H1 (cell line): ENCODE measurements at regions of chr10 and their contacts with region 1.

Region 1: GRCh38 chr10:71727738-71728737 is 8.5 kb upstream of the C10orf105 start:
- DNase-seq: no peak
- H3K4me3 ChIP-seq: no peak overlapping the region
- H3K27ac ChIP-seq: no peak overlapping the region
- H3K4me1 ChIP-seq: peaks cover 0 to 4% (median 0%) of the 10 kb centered on the region in 4 experiments; a peak in 1 of 7 replicates
- H3K27me3 ChIP-seq: no peaks in the 10 kb centered on the region
- CTCF ChIP-seq: no peak
- EP300 ChIP-seq: no peak
- POLR2A ChIP-seq: no peak
- RAD21 ChIP-seq: no peak

Region 2: DNA sequence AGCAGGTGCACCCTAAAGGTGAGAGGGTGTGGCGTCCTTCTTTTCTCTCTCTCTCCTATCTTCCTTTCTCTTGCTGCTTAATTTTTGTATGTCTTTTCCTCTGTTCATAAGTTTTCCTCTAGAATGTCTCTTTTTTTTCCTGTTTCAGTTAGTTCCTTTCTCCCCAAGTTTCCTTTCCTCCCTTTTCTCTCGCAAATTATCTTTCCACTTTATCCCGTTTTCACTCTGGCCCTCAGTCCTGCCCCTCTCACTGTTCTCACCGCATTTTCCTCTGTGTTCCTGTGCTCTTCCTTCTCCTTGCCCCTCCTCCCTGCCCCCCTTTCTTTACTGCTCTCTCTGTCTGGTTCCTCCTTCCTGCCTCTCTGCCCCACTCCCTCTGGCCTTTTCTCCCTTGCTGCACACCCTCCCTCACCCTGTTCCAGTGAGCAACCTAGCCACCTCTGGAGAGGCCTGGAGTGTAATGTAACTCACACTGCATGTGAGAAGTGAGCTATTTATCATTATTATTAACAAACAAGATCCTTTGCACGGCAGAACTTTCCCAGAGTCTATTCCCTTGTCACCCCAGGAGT is 166.9 kb before region 1 on chr10:
- CTCF ChIA-PET with region 1: no interaction called
- POLR2A ChIA-PET with region 1: no interaction called
- DNase-seq: no peak
- H3K4me3 ChIP-seq: no peak overlapping the region
- H3K27ac ChIP-seq: no peak overlapping the region
- H3K4me1 ChIP-seq: peaks cover 2 to 14% (median 10%) of the 10 kb centered on the region in 4 experiments
- H3K27me3 ChIP-seq: 0 out of 7 replicates have a peak, but pooled peaks cover 0 to 2% (median 0%) of the 10 kb centered on the region in 4 experiments
- CTCF ChIP-seq: no peak
- EP300 ChIP-seq: no peak
- POLR2A ChIP-seq: no peak
- RAD21 ChIP-seq: no peak

Region 3: DNA sequence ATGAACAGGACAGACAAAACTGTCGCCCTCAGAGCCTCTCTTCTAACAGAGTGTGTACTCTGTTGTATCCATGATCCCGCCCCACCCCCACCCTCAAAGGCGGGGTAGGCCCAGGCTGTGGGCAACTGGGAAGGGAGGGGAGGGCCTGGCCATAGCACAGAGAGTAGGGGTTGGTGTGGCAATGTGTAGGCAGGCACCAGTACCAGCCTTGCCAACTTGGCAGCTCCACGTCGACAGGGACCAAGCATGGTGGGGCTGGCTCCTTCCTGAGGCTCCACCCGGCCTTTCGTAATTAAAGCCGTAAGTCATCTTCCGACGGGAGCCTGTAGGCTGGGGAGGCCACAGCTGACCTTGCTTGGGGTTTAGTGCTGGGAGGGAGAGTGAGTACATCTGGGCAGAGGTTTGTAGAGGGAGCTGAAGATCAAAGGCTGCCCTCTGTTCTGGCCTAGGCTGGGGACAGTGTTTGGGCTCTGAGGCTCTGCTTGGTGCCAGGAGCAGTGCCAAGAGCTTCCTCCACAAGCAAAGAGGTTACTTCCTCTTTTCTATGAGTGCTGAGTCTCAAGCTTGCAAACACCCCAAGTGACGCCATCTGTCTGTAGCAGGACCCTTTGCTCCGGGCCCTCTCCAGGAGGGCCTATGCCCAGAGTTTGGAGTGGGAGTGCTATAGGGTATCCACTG is 130.1 kb before region 1 on chr10:
- CTCF ChIA-PET with region 1: no interaction called
- POLR2A ChIA-PET with region 1: no interaction called
- DNase-seq: no peak
- H3K4me3 ChIP-seq: no peak overlapping the region
- H3K27ac ChIP-seq: no peak overlapping the region
- H3K4me1 ChIP-seq: no peaks in the 10 kb centered on the region
- H3K27me3 ChIP-seq: no peaks in the 10 kb centered on the region
- CTCF ChIP-seq: no peak
- EP300 ChIP-seq: no peak
- POLR2A ChIP-seq: no peak
- RAD21 ChIP-seq: no peak

Region 4: DNA sequence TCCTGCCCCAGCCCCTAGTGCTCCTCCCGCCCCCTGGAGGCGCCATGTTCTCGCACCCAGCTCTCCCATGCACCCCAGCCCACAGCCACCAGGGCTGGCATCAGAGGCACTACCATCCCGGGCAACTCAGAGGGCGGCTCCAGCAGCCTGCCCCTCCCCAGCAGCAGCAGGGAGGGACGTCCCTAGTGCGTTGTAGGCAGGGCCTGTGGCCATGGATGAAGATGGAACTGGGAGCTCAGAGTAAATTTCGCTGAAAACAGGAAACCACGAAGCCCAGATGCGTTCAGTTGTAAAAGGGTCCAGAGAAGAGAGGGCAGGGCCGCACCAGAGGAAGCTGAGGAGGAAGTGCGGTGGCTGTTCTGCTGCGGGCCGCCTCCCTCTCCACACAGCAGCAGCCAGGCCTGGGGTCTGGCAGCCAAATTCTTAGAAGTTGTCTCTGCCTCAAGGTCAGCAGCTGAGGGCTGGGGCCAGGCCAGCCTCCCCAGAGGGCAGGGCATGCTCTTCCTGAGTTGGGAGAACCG is 20.7 kb after region 1 on chr10:
- CTCF ChIA-PET with region 1: interaction called, 23 read pairs
- POLR2A ChIA-PET with region 1: no interaction called
- DNase-seq: no peak
- H3K4me3 ChIP-seq: no peak overlapping the region
- H3K27ac ChIP-seq: no peak overlapping the region
- H3K4me1 ChIP-seq: peaks cover 1 to 8% (median 4%) of the 10 kb centered on the region in 4 experiments; a peak in 5 of 7 replicates
- H3K27me3 ChIP-seq: 0 out of 7 replicates have a peak, but pooled peaks cover 0 to 2% (median 0%) of the 10 kb centered on the region in 4 experiments
- CTCF ChIP-seq: peak in 2 of 3 experiments; percentile 12; a peak in 1 of 4 replicates
- EP300 ChIP-seq: no peak
- POLR2A ChIP-seq: no peak
- RAD21 ChIP-seq: no peak

Region 5: DNA sequence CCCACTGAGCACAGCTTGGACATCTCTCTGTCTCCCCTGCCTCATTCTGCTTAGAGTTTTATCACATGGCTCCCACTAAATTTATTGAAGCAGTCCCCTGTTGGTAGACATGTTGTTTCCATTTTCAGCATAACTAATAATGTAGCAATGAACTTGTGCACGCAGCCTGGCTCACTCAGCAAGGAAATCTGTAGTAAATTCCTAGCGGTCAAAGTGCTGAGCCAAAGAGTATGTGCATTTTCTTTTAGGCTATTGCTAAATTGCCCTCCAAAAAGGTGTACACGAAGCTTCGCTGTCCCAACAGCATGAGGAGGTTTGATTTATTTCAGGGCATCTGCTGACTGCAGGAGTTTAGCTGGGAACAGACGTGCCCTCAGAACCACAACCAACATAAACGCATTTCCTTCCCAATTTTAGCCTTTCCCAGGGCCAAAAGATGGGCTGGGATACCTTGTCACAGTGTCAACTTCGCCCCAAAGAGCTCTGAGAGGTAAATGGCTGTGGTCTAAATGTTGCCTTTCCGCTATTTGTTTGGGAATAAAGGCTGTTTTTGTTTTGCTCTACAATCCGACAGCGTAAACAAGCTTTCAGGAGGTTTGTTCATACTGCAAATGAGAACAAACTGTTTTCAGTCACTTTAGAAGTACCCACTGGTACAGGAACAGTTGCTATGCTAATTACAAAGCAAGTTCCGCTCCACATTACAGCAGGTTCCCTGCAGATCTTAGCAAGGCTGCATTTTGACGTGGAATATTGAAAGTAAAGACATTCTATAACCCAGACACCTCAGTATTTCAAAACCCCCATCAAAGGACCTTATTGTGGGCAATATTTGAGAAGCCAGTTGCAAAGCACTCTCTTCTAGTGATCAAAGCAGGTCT is 28.5 kb after region 1 on chr10:
- CTCF ChIA-PET with region 1: interaction called, 23 read pairs
- POLR2A ChIA-PET with region 1: no interaction called
- DNase-seq: no peak
- H3K4me3 ChIP-seq: no peak overlapping the region
- H3K27ac ChIP-seq: no peak overlapping the region
- H3K4me1 ChIP-seq: peaks cover 0 to 7% (median 4%) of the 10 kb centered on the region in 4 experiments; a peak in 5 of 7 replicates
- H3K27me3 ChIP-seq: no peaks in the 10 kb centered on the region; a peak in 3 of 7 replicates
- CTCF ChIP-seq: no peak
- EP300 ChIP-seq: no peak
- POLR2A ChIP-seq: no peak
- RAD21 ChIP-seq: no peak

Region 6: DNA sequence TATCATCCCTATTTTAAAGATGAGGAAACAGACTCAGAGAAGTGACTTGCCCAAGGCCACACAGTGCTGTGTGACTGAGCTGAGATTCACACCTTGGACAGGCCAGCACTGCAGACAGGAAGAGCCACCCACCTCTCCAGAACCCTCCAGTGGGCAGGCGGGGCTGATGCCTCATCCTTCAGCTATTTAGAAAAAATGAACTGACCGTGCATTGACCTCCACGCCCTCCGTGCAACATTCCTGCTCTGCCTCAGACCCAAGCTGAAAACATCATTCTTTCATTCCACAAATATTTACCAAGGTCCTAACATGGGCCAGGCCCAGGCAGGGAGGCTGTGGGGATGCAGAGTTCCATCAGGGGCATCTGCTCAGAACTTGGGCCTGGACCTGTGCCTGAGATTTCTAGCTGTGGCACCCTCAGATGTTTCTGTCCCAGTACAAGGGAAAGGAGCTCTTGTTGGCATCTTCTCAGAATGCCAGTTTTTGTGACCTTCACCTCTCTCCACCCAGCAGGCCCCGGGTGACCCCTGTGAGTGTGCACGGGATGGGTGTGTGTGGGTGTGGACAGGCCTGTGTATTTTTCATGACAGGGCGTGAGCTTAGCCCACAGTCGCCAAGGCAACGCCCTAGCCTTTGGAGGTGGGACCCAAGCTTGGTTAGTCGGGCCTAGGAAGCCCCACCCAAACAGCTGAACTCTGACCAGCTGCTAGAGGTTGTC is 38.8 kb after region 1 on chr10:
- CTCF ChIA-PET with region 1: interaction called, 15 read pairs
- POLR2A ChIA-PET with region 1: no interaction called
- DNase-seq: no peak
- H3K4me3 ChIP-seq: no peak overlapping the region
- H3K27ac ChIP-seq: no peak overlapping the region
- H3K4me1 ChIP-seq: no peaks in the 10 kb centered on the region; a peak in 1 of 7 replicates
- H3K27me3 ChIP-seq: peaks cover 0 to 2% (median under 1%) of the 10 kb centered on the region in 4 experiments; a peak in 1 of 7 replicates
- CTCF ChIP-seq: no peak
- EP300 ChIP-seq: no peak
- POLR2A ChIP-seq: no peak
- RAD21 ChIP-seq: no peak

Region 7: DNA sequence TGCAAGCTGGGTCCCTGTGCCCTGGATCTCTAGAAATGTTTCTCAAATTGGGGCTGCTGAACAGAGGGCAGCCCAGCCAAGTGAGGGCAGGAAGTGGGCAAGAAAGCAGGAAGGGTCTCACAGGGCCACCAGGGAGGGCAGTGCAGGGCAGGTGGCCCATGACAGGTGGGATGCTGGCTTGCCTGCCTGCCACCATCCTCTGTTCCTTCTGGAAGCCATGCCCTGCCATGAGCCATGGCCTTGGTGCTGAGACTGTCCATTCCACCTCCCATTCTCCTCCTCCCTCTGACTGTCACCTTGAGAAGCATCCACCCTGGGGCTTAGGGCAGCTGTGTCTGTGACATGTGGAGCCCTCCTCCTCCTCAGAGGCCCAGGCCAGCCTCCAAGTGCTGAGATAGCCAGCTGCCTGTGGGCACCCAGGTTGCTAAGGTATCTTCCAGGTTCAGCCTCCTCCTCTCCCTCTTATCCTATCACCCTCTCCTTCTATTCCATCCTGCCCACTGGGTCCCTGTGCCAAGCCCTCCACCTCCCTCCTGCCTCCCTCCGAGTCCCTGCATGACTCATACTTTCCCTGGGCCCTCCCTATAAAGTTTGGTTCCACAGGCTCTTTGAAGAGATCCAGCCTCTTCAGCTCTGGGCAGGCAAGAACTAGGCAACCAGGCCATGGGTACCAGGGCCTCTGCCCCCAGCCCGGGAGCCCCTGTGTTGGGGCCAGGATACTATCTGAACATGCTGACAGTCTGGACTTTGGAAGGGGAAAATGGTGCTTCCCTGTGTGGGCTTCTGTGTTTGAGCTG is 44.0 kb after region 1 on chr10:
- CTCF ChIA-PET with region 1: interaction called, 15 read pairs
- POLR2A ChIA-PET with region 1: no interaction called
- DNase-seq: no peak
- H3K4me3 ChIP-seq: no peak overlapping the region
- H3K27ac ChIP-seq: no peak overlapping the region
- H3K4me1 ChIP-seq: peaks cover 0 to 7% (median under 1%) of the 10 kb centered on the region in 4 experiments; a peak in 3 of 7 replicates
- H3K27me3 ChIP-seq: peaks cover 3 to 23% (median 16%) of the 10 kb centered on the region in 4 experiments; a peak in 6 of 7 replicates
- CTCF ChIP-seq: no peak
- EP300 ChIP-seq: no peak
- POLR2A ChIP-seq: no peak
- RAD21 ChIP-seq: no peak

Region 8: DNA sequence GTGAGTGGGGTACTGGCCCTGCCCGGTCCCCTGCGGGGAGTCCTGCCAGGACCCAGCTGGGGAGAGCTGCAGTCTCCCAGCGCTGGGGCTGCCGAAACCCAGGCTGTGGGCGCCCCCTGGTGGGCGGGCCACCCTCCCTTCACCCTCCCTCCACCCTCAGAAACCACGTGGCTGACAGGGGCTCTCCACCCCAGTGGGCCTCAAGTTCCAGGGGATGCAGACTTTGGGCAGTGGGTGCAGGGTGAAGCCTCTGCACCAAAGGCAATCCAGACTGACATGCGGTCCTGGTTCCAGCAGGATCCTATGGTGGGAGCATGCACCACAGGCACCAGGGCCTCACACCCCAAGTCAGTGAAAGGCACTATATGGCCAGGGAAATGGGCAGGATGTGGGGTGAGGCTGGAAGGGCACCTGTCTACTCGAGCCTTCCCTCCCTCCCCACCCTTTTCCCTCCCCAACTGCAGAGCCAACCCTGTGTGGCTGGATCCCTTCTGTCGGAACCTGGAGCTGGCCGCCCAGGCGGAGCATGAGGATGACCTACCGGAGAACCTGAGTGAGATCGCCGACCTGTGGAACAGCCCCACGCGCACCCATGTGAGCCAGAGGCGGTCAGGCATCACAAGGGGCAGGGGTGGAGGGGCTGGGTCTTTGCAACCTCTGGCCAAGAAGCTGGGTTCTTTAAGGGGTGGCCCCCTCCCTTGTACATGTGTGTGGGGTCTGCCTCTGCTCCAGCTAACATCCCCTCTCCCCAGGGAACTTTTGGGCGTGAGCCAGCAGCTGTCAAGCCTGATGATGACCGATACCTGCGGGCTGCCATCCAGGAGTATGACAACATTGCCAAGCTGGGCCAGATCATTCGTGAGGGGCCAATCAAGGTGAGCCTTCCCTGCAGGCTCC is 84.2 kb after region 1 on chr10:
- CTCF ChIA-PET with region 1: interaction called, 10 read pairs
- POLR2A ChIA-PET with region 1: no interaction called
- DNase-seq: peak in 1 of 2 experiments; percentile 87
- H3K4me3 ChIP-seq: no peak overlapping the region
- H3K27ac ChIP-seq: no peak overlapping the region
- H3K4me1 ChIP-seq: peaks cover 0 to 3% (median 0%) of the 10 kb centered on the region in 4 experiments; a peak in 1 of 7 replicates
- H3K27me3 ChIP-seq: no peaks in the 10 kb centered on the region
- CTCF ChIP-seq: peak; percentile 71 to 82 (median 79)
- EP300 ChIP-seq: no peak
- POLR2A ChIP-seq: no peak
- RAD21 ChIP-seq: peak; percentile 83 to 88